ENCODE measurements at regions of chr1 and their contacts with region 1.

Region 1: GRCh38 chr1:244864253-244865027 is at the start of gene HNRNPU:
- DNase-seq: peak; percentile 88
- ATAC-seq: peak; percentile 81
- H3K4me3 ChIP-seq: peak within 1 kb of the TSS; percentile 93 to 98
- H3K27ac ChIP-seq: peak within 1 kb of the TSS; percentile 94
- H3K4me1 ChIP-seq: peaks cover 18 to 25% of the 10 kb centered on the region in 2 experiments
- H3K27me3 ChIP-seq: no peaks in the 10 kb centered on the region
- CTCF ChIP-seq: peak in 2 of 3 experiments; percentile 33 to 39; a peak in 4 of 6 replicates
- POLR2A ChIP-seq: peak; percentile 71
- RAD21 ChIP-seq: peak; percentile 2; the same call in 1 of the 2 replicates
- total RNA-seq, gene HNRNPU: 424 TPM

Region 2: DNA sequence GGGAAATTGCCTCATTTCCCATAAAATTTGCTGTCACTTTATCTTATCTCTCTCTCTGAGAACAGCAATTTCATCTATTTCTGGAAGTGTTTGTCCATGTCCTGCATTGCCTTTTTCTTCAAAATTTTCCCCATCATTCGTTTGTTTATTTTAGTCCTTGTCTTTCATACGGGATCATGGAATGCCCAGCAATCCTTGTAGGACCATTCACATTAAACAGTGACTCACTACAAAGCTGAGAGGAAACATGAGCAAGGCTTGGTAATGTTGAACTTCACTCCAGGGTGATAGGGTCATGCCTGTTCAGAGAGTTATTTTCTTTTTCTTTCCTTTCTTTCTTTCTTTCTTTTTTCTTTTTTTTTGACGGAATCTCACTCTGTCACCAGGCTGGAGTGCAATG is 32.1 kb after region 1 on chr1:
- CTCF ChIA-PET with region 1: no interaction called
- POLR2A ChIA-PET with region 1: no interaction called
- RAD21 ChIA-PET with region 1: no interaction called
- intact Hi-C with region 1: no loop called
- DNase-seq: no peak
- ATAC-seq: no peak
- H3K4me3 ChIP-seq: no peak overlapping the region
- H3K27ac ChIP-seq: no peak overlapping the region
- H3K4me1 ChIP-seq: peaks cover 5 to 15% of the 10 kb centered on the region in 2 experiments
- H3K27me3 ChIP-seq: no peaks in the 10 kb centered on the region
- CTCF ChIP-seq: no peak
- POLR2A ChIP-seq: no peak
- RAD21 ChIP-seq: no peak

Region 3: GRCh38 chr1:244952940-244953339 is 88.5 kb after region 1 on chr1:
- CTCF ChIA-PET with region 1: no interaction called
- POLR2A ChIA-PET with region 1: no interaction called
- RAD21 ChIA-PET with region 1: no interaction called
- intact Hi-C with region 1: no loop called
- DNase-seq: no peak
- ATAC-seq: no peak
- H3K4me3 ChIP-seq: no peak overlapping the region
- H3K27ac ChIP-seq: no peak overlapping the region
- H3K4me1 ChIP-seq: no peaks in the 10 kb centered on the region
- H3K27me3 ChIP-seq: no peaks in the 10 kb centered on the region
- CTCF ChIP-seq: no peak
- POLR2A ChIP-seq: no peak
- RAD21 ChIP-seq: no peak

Region 4: DNA sequence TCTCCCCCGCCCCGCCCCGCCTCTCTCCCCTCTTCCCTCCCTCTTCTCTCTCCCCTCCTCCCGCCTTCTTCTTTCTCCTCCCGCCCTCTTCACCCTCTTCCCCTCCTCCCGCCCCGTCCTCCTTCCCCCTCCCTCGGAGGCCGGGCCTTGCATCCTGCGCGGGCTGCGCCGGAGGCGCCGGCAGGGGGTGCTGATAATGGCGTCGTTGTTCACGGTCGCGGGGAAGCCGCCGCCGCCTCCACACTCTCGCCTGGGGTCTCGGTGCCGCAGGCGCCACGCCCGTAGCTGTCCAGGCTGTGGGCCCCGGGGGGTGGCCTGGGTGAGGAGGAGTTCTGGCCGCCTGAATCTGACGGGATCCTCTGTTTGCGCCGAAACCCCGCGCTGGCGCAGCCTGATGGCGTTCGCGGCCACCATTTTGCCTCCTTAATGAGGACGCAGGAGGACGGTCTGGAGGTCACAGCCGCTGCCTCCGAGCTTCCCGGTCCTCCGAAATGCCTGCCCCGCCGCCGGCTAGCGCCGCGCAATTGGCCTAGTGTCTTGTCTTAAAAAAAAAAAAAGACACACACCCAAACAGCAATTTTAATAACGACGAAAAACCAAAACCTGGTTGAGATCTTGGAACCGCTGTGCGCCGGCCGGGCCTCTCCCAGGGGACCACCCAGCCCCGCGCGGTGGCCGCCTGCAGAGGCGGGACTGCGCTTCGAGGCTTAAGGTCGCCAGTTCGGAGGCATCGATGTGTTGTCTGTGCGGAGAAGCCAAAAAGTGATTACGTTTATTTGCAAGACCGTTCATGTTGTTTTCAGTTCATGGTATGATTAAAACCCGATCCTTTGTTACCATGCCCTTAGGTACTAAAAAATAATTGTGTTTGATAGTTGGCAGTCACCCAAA is 106.5 kb after region 1 on chr1:
- CTCF ChIA-PET with region 1: no interaction called
- POLR2A ChIA-PET with region 1: interaction called, 3 read pairs
- RAD21 ChIA-PET with region 1: no interaction called
- intact Hi-C with region 1: loop called (anchors 1 kb)
- DNase-seq: peak; percentile 93
- ATAC-seq: peak; percentile 80
- H3K4me3 ChIP-seq: peak overlapping the region; percentile 60 to 67
- H3K27ac ChIP-seq: peak overlapping the region; percentile 98
- H3K4me1 ChIP-seq: peaks cover 12 to 29% of the 10 kb centered on the region in 2 experiments; a peak in 3 of 4 replicates
- H3K27me3 ChIP-seq: no peaks in the 10 kb centered on the region
- CTCF ChIP-seq: peak; percentile 25 to 57 (median 52); a peak in 4 of 6 replicates
- POLR2A ChIP-seq: no peak
- RAD21 ChIP-seq: no peak; the same call in 1 of the 2 replicates